Heart right ventricle (tissue), 16 donors: ENCODE measurements at regions of chr4 and their contacts with region 1.

Region 1: DNA sequence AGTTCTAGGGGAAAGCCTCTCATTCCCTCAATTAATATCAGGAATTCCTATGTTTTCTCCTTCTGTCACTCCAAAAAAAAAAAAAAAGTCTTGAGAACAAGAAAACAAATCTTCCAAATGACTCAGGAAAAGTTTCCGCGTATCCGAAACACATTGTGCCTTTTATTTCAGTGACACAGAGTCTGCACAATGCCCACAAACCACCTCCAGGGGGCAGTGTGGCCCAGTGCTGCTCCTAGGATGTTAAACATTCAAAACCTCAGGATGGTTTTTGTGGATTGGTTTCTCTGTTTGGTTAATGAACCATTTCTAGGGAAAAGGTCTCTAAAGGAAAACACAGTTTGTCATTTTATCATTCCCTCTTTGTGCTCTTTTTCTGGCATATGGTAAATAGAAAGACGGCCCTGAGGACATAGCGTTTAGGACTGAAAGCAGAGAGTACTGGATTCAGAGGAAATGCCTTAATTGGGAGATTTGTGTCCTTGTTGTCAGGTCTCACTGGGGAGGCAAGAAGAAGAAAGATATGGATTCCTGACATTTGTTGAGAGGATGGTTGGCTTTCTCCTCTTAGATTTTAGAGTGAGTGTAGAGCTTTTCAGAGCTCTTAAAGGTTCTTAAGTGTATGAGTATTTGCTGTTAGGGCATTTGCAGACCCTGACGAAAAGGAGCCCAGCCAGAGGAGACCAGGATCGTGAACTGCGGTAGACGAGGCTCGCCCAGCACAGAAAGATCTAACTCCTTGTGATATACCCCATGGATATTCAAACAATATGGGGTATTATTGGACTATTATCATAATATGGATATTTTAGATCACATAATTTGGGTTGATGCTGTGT is 65.7 kb upstream of the MAP9 start:
- DNase-seq: peak; percentile 87
- ATAC-seq: peak; percentile 77 to 95 (median 94)
- H3K4me3 ChIP-seq: peak overlapping the region in 8 of 10 donors; percentile 6 to 44 (median 30)
- H3K27ac ChIP-seq: peak overlapping the region in 6 of 10 donors; percentile 24 to 65 (median 54)
- H3K4me1 ChIP-seq: peaks cover 0 to 13% (median 0%) of the 10 kb centered on the region in 9 donors
- H3K27me3 ChIP-seq: no peaks in the 10 kb centered on the region
- CTCF ChIP-seq: peak; percentile 90 to 99 (median 96)

Region 2: DNA sequence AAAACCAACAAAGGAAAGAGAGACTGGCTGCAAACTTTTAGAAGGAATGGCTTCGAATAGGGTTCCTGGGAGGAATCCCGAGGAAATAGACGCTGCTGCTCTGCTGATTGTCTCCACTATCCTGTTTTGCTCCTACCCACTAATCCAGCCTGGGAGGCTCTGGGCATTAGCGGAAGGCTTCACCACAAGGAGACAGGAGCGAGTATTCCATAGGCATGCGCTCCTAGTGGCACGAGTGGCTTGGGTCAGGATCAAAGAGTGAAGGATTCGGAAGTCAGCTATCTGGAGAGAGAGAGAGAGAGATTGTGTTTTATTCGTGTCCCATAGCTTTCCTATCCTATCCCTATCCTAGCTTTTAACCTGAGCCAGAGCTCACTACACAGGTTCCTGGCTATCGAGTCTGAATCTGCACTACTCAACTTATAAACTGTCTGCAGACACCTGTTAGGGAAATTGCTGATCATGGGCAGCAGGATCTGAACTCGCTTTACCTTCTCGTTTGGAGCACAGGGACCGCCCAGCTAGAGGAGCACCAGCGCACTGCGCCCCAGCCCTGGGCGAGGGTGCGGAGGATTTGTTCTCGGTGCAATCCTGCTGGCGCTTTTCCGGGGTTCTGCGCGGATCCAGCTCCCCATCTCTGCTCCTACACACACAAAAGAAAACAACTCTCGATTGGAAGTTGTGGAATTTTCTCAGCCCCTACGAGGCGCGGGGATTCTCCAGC is 234.8 kb before region 1 on chr4:
- intact Hi-C with region 1: no loop called
- DNase-seq: no peak
- ATAC-seq: no peak
- H3K4me3 ChIP-seq: peak overlapping the region in 8 of 10 donors; percentile 4 to 46 (median 25)
- H3K27ac ChIP-seq: no peak overlapping the region
- H3K4me1 ChIP-seq: peaks cover 0 to 16% (median 8%) of the 10 kb centered on the region in 9 donors
- H3K27me3 ChIP-seq: peaks cover 10 to 65% (median 40%) of the 10 kb centered on the region in 7 donors
- CTCF ChIP-seq: no peak

Region 3: GRCh38 chr4:155512817-155513216 is 70.3 kb after region 1 on chr4:
- intact Hi-C with region 1: loop called in 3 of 10 experiments (anchors 5 kb)
- DNase-seq: peak in 1 of 2 donors; percentile 82
- ATAC-seq: peak; percentile 52 to 81 (median 76)
- H3K4me3 ChIP-seq: no peak overlapping the region
- H3K27ac ChIP-seq: peak overlapping the region in 9 of 10 donors; percentile 28 to 85 (median 68)
- H3K4me1 ChIP-seq: peaks cover 0 to 74% (median 39%) of the 10 kb centered on the region in 9 donors
- H3K27me3 ChIP-seq: no peaks in the 10 kb centered on the region
- CTCF ChIP-seq: no peak

Region 4: DNA sequence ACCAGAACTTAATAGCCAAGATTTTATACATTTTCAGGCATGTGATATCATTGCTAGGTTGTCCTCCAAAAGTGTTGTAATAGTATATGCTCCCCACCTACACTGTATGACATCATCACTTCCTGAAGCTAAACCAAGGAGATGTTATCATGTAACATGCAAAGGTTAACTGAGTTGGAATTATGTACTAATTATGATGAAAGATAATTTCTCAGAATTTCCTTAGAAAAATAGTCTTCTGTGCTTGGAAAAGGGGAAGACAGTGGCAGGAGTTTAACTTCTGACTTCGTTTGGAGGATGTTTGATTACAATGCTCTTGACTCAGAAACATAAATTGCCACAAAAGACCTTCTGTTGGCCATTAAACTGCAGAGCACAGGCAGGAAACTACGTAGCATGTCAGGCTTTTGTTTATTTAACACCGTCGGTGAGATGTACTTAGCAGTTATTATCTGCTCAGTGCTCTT is 140.5 kb after region 1 on chr4:
- intact Hi-C with region 1: loop called in 1 of 10 experiments (anchors 10 kb)
- DNase-seq: no peak
- ATAC-seq: peak in 5 of 8 donors; percentile 20 to 62 (median 52)
- H3K4me3 ChIP-seq: no peak overlapping the region
- H3K27ac ChIP-seq: peak overlapping the region in 3 of 10 donors; percentile 6 to 44 (median 14)
- H3K4me1 ChIP-seq: peaks cover 0 to 29% (median 20%) of the 10 kb centered on the region in 9 donors
- H3K27me3 ChIP-seq: no peaks in the 10 kb centered on the region
- CTCF ChIP-seq: no peak

Region 5: GRCh38 chr4:155660436-155660835 is 217.9 kb after region 1 on chr4:
- intact Hi-C with region 1: loop called in 6 of 10 experiments (anchors 5 to 10 kb)
- DNase-seq: no peak
- ATAC-seq: no peak
- H3K4me3 ChIP-seq: no peak overlapping the region
- H3K27ac ChIP-seq: peak overlapping the region in 1 of 10 donors; percentile 23
- H3K4me1 ChIP-seq: peaks cover 0 to 24% (median 10%) of the 10 kb centered on the region in 9 donors
- H3K27me3 ChIP-seq: no peaks in the 10 kb centered on the region
- CTCF ChIP-seq: no peak

Region 6: GRCh38 chr4:155953151-155954114 is 510.9 kb after region 1 on chr4 and contains the start of gene CTSO:
- intact Hi-C with region 1: loop called in 2 of 10 experiments (anchors 2 to 5 kb)
- DNase-seq: peak; percentile 75 to 79
- ATAC-seq: peak; percentile 95 to 99 (median 96)
- H3K4me3 ChIP-seq: peak within 1 kb of the TSS; percentile 65 to 91 (median 88)
- H3K27ac ChIP-seq: peak within 1 kb of the TSS; percentile 83 to 100 (median 99)
- H3K4me1 ChIP-seq: peaks cover 0 to 21% (median 8%) of the 10 kb centered on the region in 9 donors
- H3K27me3 ChIP-seq: no peaks in the 10 kb centered on the region
- CTCF ChIP-seq: peak; percentile 33 to 74 (median 62)
- total RNA-seq, gene CTSO: 6.1 to 21.4 (median 9.0) TPM